ENCODE measurements at regions of chr10 and their contacts with region 1.

Region 1: GRCh38 chr10:93376372-93377293 is 105.5 kb downstream of the MYOF start:
- DNase-seq: peak; percentile 76 to 90
- ATAC-seq: peak; percentile 80 to 90
- H3K4me3 ChIP-seq: peak overlapping the region; percentile 19; the same call in 2 of the 3 replicates
- H3K27ac ChIP-seq: peak overlapping the region; percentile 87
- H3K4me1 ChIP-seq: peaks cover 42% of the 10 kb centered on the region
- CTCF ChIP-seq: peak; percentile 98
- EP300 ChIP-seq: no peak
- POLR2A ChIP-seq: no peak
- RAD21 ChIP-seq: peak; percentile 98

Region 2: GRCh38 chr10:93363891-93364648 is 12.6 kb before region 1 on chr10:
- CTCF ChIA-PET with region 1: interaction called, 150 read pairs
- POLR2A ChIA-PET with region 1: no interaction called
- DNase-seq: no peak
- ATAC-seq: no peak
- H3K4me3 ChIP-seq: no peak overlapping the region
- H3K27ac ChIP-seq: no peak overlapping the region
- H3K4me1 ChIP-seq: no peaks in the 10 kb centered on the region
- CTCF ChIP-seq: no peak
- EP300 ChIP-seq: no peak
- POLR2A ChIP-seq: no peak
- RAD21 ChIP-seq: no peak

Region 3: DNA sequence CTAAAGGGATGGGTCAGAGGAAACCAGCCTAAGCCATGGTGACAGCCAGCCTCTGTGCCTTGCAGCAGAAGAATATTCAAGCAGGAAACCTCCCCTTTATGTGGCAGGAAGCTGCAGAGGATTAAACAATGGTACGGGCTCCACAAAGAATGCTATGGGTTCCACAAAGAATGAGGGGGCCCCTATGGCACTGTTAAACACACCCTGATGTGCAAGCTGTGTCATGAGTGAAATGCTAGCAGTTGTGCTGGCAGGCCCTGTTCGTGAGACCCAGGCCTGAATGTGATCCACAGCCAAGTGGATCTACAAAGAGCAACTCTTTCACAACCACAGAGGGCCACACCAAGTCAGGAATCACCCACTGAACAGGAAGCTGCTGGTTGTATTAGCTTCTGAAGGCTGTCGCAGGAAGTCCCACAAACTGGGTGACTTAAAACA is 36.6 kb after region 1 on chr10:
- CTCF ChIA-PET with region 1: interaction called, 23 read pairs
- POLR2A ChIA-PET with region 1: no interaction called
- DNase-seq: no peak
- ATAC-seq: no peak
- H3K4me3 ChIP-seq: no peak overlapping the region
- H3K27ac ChIP-seq: no peak overlapping the region
- H3K4me1 ChIP-seq: no peaks in the 10 kb centered on the region
- CTCF ChIP-seq: no peak
- EP300 ChIP-seq: no peak
- POLR2A ChIP-seq: no peak
- RAD21 ChIP-seq: no peak

Region 4: DNA sequence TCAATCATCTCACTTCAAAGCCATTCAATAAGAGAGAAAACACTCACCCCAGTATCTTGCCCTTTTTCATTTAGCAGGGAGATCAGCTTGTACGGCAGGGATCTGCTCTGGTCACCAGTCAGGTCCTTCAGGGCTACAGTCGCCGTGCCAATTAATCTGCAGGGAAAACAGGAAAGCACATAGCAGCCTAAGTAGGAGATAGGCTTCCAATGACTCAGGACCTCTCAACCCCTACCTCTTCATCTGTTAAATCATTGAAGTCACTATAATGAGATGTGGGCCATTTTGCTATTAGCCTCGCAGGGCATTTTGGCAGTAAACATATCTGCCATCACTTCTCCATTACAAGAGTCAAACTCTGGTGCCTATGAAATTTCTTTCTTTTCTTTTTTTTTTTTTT is 54.7 kb after region 1 on chr10:
- CTCF ChIA-PET with region 1: interaction called, 83 read pairs
- POLR2A ChIA-PET with region 1: no interaction called
- DNase-seq: no peak
- ATAC-seq: peak in 1 of 2 experiments; percentile 12; a peak in 2 of 6 replicates
- H3K4me3 ChIP-seq: no peak overlapping the region
- H3K27ac ChIP-seq: peak overlapping the region; percentile 23 to 97; a peak in 4 of 6 replicates
- H3K4me1 ChIP-seq: peaks cover 50% of the 10 kb centered on the region
- CTCF ChIP-seq: no peak
- EP300 ChIP-seq: no peak
- POLR2A ChIP-seq: no peak
- RAD21 ChIP-seq: no peak

Region 5: DNA sequence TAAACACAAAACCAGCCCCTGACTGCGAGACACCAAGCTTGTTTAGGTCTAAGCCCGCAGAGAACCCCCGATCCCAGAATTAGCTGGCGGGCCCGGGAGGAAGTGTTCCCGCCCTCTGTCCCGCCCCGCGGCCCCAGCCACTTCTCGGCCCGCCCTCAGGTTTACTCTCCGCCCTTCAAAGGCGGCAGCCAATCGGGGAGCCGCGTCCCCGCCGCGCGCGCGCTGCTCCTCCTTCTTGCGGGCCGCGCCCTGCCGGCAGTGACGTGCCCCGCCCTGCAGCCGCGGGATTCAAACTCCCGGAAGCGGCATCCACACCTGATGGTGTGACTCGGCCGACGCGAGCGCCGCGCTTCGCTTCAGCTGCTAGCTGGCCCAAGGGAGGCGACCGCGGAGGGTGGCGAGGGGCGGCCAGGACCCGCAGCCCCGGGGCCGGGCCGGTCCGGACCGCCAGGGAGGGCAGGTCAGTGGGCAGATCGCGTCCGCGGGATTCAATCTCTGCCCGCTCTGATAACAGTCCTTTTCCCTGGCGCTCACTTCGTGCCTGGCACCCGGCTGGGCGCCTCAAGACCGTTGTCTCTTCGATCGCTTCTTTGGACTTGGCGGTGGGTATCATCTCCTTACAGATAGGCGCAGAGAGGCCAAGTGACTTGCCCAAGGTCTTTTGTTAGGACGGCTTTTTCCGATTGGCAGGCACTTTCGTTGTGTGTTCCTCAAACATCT is 119.8 kb after region 1 on chr10 and contains the start of gene CEP55:
- CTCF ChIA-PET with region 1: interaction called, 924 read pairs
- POLR2A ChIA-PET with region 1: interaction called, 4 read pairs
- DNase-seq: peak; percentile 84 to 96
- ATAC-seq: peak; percentile 97 to 99
- H3K4me3 ChIP-seq: peak within 1 kb of the TSS; percentile 48
- H3K27ac ChIP-seq: peak within 1 kb of the TSS; percentile 79 to 90
- H3K4me1 ChIP-seq: peaks cover 20% of the 10 kb centered on the region
- CTCF ChIP-seq: no peak
- EP300 ChIP-seq: no peak
- POLR2A ChIP-seq: peak; percentile 55
- RAD21 ChIP-seq: no peak
- polyA plus RNA-seq, gene CEP55: 63.5 and 87.0 TPM in 2 replicates